Activated T-helper 2 cell treated with anti-CD3 and anti-CD28 coated beads, Interferon-gamma antibody, Interleukin-2, Interleukin-4, amounts not matched to agents 10 μg/mL and 5 μg/mL and 100 μg/mL, durations not matched to agents 14 hours and 24 hours and 36 hours (primary cell): ENCODE measurements at regions of chr17 and their contacts with region 1.

Region 1: GRCh38 chr17:7484067-7484918 is at the start of gene POLR2A:
- DNase-seq: peak; percentile 95
- H3K4me3 Mint-ChIP-seq: peak within 1 kb of the TSS; percentile 98
- H3K27ac Mint-ChIP-seq: peak within 1 kb of the TSS; percentile 99
- H3K4me1 Mint-ChIP-seq: peaks cover 49% of the 10 kb centered on the region
- H3K27me3 Mint-ChIP-seq: no peaks in the 10 kb centered on the region
- total RNA-seq, gene POLR2A: 247 and 261 TPM in 2 replicates

Region 2: DNA sequence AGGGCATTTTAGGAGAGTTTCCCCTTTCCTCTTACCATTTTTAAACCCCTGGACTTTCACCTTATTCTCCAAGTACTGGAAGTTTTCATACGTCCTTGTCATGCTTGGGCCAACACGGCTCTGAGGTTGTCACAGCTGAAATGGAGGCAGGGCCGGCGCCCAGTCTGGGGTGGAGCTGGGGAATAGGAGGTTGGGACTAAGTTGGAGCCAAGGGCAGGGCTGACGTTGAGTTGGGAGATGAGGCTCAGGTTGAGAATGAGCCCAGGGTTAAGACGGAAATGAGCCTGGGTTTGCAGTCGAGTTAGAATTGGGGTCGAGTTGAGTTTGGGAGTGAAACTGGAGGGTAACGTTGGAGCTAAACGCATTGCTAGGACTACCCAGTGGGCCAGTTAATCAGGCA is 405.6 kb before region 1 on chr17:
- intact Hi-C with region 1: no loop called
- DNase-seq: no peak
- H3K4me3 Mint-ChIP-seq: no peak overlapping the region
- H3K27ac Mint-ChIP-seq: no peak overlapping the region
- H3K4me1 Mint-ChIP-seq: peaks cover 11% of the 10 kb centered on the region
- H3K27me3 Mint-ChIP-seq: peaks cover 7% of the 10 kb centered on the region

Region 3: GRCh38 chr17:7306911-7307686 is 177.2 kb before region 1 on chr17 and contains the start of gene EIF5A:
- intact Hi-C with region 1: loop called (anchors 1 kb)
- DNase-seq: peak; percentile 99
- H3K4me3 Mint-ChIP-seq: peak within 1 kb of the TSS; percentile 94
- H3K27ac Mint-ChIP-seq: peak within 1 kb of the TSS; percentile 97
- H3K4me1 Mint-ChIP-seq: peaks cover 32% of the 10 kb centered on the region
- H3K27me3 Mint-ChIP-seq: peaks cover under 1% of the 10 kb centered on the region
- total RNA-seq, gene EIF5A: 1,189 and 1,199 TPM in 2 replicates

Region 4: DNA sequence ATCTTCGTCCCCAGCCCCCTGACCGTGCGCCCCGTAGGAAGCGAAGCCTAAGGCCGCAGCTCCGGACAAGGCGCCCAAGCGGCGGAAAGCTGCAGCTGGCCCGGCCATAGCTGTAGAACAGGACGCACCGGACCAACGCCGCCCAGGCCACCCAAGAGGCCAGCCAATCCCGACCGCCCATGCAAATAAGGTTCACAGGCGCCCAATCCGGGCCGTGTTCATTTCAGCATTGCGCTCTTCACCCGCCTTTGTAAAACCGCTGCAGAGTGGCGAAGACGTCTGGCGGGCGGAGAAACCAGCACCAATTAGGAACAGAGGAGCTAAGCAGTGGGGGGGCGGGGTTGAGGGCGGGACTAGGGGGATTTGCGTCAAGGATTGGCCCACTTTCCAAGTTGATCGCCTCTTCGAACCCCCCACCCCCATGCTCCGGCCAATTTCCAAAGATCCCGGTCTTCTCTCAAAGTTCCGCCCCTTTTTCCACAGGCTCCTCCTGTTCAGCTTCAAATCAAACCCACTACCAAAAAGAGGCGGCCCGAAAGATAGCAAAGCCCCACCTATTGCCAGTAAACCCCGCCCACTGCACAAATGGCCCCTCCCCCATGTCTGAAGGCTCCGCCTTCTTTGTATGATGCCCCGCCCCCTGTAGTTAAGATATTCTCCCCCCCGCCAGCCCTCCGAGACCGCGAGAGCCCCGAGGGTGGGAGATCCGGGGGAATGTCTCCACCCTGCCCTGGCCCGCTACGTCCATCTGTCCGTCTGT is 80.1 kb before region 1 on chr17 and contains the start of gene TMEM256:
- intact Hi-C with region 1: loop called (anchors 1 kb)
- DNase-seq: peak; percentile 95
- H3K4me3 Mint-ChIP-seq: peak within 1 kb of the TSS; percentile 87
- H3K27ac Mint-ChIP-seq: peak within 1 kb of the TSS; percentile 92
- H3K4me1 Mint-ChIP-seq: peaks cover 11% of the 10 kb centered on the region
- H3K27me3 Mint-ChIP-seq: peaks cover 13% of the 10 kb centered on the region
- total RNA-seq, gene TMEM256: 67.3 and 67.7 TPM in 2 replicates

Region 5: GRCh38 chr17:7454980-7455379 is 29.3 kb before region 1 on chr17:
- intact Hi-C with region 1: loop called (anchors 1 kb)
- DNase-seq: no peak
- H3K4me3 Mint-ChIP-seq: peak overlapping the region; percentile 91
- H3K27ac Mint-ChIP-seq: peak overlapping the region; percentile 93
- H3K4me1 Mint-ChIP-seq: peaks cover 18% of the 10 kb centered on the region
- H3K27me3 Mint-ChIP-seq: no peaks in the 10 kb centered on the region

Region 6: GRCh38 chr17:7515911-7516610 is 31.8 kb after region 1 on chr17:
- intact Hi-C with region 1: no loop called
- DNase-seq: no peak
- H3K4me3 Mint-ChIP-seq: no peak overlapping the region
- H3K27ac Mint-ChIP-seq: no peak overlapping the region
- H3K4me1 Mint-ChIP-seq: peaks cover 5% of the 10 kb centered on the region
- H3K27me3 Mint-ChIP-seq: no peaks in the 10 kb centered on the region

Region 7: DNA sequence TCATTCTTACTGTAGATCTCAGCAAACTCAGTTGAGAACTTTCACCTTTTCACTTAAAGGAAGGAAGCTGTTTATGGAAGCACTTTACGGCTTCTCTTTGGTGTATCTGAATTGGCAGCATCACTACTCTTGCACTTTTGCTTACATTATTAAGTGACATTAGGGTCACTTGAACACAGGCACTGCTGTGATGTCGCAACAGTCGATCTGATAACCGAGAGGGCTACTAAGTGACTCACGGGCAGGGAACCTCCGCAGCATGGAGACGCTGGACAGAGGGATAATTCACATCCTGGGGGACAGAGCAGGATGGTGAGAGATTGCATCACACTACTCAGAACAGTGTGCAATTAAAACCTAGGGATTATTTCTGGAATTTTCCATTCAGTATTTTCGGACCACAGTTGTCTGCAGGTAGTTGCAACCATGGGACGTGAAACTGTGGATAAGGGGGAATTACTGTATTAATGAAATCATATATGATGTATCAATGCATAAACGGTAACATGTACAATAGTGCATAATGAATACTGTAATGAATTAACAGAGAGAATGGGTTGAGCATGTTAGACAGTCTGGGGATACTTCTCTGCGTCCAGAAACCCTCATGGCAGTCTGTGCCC is 289.9 kb after region 1 on chr17:
- intact Hi-C with region 1: no loop called
- DNase-seq: no peak
- H3K4me3 Mint-ChIP-seq: no peak overlapping the region
- H3K27ac Mint-ChIP-seq: no peak overlapping the region
- H3K4me1 Mint-ChIP-seq: no peaks in the 10 kb centered on the region
- H3K27me3 Mint-ChIP-seq: peaks cover 12% of the 10 kb centered on the region

Region 8: DNA sequence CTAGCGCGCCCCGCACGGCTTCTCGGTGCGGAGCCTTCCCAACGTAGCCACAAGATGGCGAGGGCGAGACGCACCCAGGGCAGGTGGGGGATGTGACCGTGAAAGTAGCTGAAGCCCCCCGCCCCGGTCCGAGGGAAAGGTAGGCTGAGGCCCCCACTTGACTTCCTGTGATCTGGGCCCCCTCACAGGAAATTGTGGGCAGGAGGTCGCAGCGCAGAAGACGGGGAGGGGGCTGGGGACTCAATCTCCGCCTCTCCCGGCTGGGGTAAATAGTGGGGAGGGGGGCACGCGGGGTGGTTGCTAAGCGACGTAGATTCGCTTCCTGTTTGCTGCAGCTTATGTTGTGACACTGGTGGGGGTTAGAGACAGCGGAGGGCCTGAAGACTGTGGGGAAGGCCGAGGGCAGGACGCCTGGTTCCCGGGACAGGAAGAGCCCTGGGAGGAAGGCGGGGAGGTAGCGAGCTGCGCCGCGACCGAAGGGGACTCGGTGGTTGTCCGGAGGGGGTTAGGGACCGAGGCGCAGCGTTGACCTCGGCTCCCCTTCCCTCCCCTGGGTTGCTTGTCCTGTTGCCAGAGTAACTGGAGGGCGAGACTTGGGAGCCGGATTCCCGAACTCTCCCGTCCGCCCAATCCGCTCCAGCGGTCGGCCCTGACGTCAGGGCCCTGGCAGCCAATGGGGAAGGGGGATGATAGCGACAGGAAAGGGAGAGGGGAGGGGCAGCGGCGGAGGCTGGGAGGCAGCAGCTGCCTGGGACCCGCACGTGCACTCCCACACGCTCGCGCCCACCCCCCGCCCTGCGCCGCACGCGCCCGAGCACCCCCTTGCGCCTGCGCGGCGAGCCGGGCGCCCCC is 350.9 kb after region 1 on chr17:
- intact Hi-C with region 1: loop called (anchors 10 kb)
- DNase-seq: peak; percentile 80
- H3K4me3 Mint-ChIP-seq: peak overlapping the region; percentile 91
- H3K27ac Mint-ChIP-seq: peak overlapping the region; percentile 89
- H3K4me1 Mint-ChIP-seq: peaks cover 42% of the 10 kb centered on the region
- H3K27me3 Mint-ChIP-seq: peaks cover 11% of the 10 kb centered on the region